ENCODE measurements at regions of chr3 and their contacts with region 1.

Region 1: GRCh38 chr3:159988617-159989271 is at the start of gene IL12A:
- DNase-seq: peak; percentile 92
- ATAC-seq: peak; percentile 97
- H3K4me3 ChIP-seq: peak within 1 kb of the TSS; percentile 49 to 87 (median 81)
- H3K4me3 Mint-ChIP-seq: peak within 1 kb of the TSS; percentile 93
- H3K27ac ChIP-seq: peak within 1 kb of the TSS; percentile 59 to 70
- H3K27ac Mint-ChIP-seq: peak within 1 kb of the TSS; percentile 89
- H3K4me1 ChIP-seq: peaks cover 15 to 29% of the 10 kb centered on the region in 2 donors
- H3K4me1 Mint-ChIP-seq: peaks cover 47% of the 10 kb centered on the region
- H3K27me3 ChIP-seq: no peaks in the 10 kb centered on the region
- H3K27me3 Mint-ChIP-seq: no peaks in the 10 kb centered on the region
- CTCF ChIP-seq: peak; percentile 98
- total RNA-seq, gene IL12A: 4.3 and 6.1 TPM in 2 replicates

Region 2: GRCh38 chr3:159919873-159920272 is 68.9 kb before region 1 on chr3:
- CTCF ChIA-PET with region 1: interaction called, 15 read pairs
- POLR2A ChIA-PET with region 1: no interaction called
- intact Hi-C with region 1: loop called (anchors 5 kb)
- DNase-seq: no peak
- ATAC-seq: no peak
- H3K4me3 ChIP-seq: no peak overlapping the region
- H3K4me3 Mint-ChIP-seq: no peak overlapping the region
- H3K27ac ChIP-seq: no peak overlapping the region
- H3K27ac Mint-ChIP-seq: peak overlapping the region; percentile 15
- H3K4me1 ChIP-seq: peaks cover 13 to 26% of the 10 kb centered on the region in 2 donors
- H3K4me1 Mint-ChIP-seq: peaks cover 33% of the 10 kb centered on the region
- H3K27me3 ChIP-seq: no peaks in the 10 kb centered on the region
- H3K27me3 Mint-ChIP-seq: no peaks in the 10 kb centered on the region
- CTCF ChIP-seq: no peak

Region 3: DNA sequence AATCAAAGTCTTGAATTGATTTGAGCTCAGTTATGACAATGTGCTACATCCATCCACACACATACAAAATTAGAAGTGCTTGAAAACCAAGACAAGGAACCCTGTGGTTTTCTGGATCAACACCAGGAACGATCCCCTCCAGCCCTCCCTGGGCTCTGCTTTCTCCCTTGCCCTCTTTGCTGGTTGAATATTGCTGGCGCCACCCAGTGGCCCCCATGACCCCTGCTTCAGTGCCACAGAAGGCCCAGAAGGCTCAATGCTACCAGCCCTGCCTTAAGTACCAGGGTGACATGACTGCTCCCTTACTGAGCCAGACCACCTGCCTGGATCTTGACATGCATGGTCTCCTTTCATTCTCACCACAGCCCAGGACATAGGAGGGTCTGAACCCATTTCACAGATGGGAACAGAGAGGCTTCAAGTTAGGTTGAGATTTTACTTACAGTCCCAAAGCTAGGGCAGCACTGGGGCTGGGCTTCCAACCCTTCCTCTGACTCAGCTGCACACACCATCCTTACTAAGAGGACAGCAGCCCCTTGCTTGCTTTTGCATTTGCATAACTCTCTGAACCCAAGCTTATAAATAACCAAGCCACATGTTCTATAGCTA is 14.9 kb after region 1 on chr3:
- CTCF ChIA-PET with region 1: interaction called, 140 read pairs
- POLR2A ChIA-PET with region 1: interaction called, 3 read pairs
- intact Hi-C with region 1: loop called (anchors 2 kb)
- DNase-seq: peak; percentile 64
- ATAC-seq: peak; percentile 82
- H3K4me3 ChIP-seq: no peak overlapping the region
- H3K4me3 Mint-ChIP-seq: no peak overlapping the region
- H3K27ac ChIP-seq: no peak overlapping the region
- H3K27ac Mint-ChIP-seq: peak overlapping the region; percentile 34
- H3K4me1 ChIP-seq: no peaks in the 10 kb centered on the region
- H3K4me1 Mint-ChIP-seq: peaks cover 6% of the 10 kb centered on the region
- H3K27me3 ChIP-seq: no peaks in the 10 kb centered on the region
- H3K27me3 Mint-ChIP-seq: no peaks in the 10 kb centered on the region
- CTCF ChIP-seq: peak; percentile 71

Region 4: DNA sequence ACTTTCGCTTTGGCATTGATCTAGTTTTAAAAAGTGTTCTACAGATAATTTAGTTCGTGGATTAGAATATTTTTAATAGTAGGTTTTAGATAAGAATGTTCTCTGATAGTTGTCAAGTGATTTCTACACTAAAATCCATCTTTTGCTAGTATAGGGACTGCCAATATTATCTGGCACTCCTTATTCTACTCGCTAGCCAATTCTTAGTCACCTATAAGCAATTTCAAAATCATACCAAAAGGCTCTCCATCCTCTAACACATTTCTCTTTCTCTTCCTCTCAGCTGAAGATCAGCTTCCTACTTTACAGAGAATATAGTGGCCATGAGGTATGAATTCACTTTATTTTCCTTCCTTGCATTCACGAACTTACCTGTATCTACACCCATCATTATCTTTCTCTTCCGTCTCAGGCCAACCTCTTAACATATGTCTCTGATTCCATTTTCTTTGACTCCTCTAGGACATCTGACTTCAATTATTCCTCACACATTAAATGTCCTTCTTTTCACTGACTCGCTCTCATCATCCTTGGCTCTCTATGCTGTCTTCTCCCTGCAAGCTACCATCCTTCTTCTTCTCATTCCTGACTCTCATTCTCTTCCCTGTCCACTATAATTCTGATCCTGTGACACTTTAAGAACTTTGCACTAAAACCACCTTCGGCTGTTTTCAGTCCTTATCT is 272.0 kb after region 1 on chr3:
- CTCF ChIA-PET with region 1: no interaction called
- POLR2A ChIA-PET with region 1: no interaction called
- intact Hi-C with region 1: no loop called
- DNase-seq: no peak
- ATAC-seq: no peak
- H3K4me3 ChIP-seq: no peak overlapping the region
- H3K4me3 Mint-ChIP-seq: no peak overlapping the region
- H3K27ac ChIP-seq: no peak overlapping the region
- H3K27ac Mint-ChIP-seq: no peak overlapping the region
- H3K4me1 ChIP-seq: no peaks in the 10 kb centered on the region
- H3K4me1 Mint-ChIP-seq: no peaks in the 10 kb centered on the region
- H3K27me3 ChIP-seq: no peaks in the 10 kb centered on the region
- H3K27me3 Mint-ChIP-seq: no peaks in the 10 kb centered on the region
- CTCF ChIP-seq: no peak

Region 5: DNA sequence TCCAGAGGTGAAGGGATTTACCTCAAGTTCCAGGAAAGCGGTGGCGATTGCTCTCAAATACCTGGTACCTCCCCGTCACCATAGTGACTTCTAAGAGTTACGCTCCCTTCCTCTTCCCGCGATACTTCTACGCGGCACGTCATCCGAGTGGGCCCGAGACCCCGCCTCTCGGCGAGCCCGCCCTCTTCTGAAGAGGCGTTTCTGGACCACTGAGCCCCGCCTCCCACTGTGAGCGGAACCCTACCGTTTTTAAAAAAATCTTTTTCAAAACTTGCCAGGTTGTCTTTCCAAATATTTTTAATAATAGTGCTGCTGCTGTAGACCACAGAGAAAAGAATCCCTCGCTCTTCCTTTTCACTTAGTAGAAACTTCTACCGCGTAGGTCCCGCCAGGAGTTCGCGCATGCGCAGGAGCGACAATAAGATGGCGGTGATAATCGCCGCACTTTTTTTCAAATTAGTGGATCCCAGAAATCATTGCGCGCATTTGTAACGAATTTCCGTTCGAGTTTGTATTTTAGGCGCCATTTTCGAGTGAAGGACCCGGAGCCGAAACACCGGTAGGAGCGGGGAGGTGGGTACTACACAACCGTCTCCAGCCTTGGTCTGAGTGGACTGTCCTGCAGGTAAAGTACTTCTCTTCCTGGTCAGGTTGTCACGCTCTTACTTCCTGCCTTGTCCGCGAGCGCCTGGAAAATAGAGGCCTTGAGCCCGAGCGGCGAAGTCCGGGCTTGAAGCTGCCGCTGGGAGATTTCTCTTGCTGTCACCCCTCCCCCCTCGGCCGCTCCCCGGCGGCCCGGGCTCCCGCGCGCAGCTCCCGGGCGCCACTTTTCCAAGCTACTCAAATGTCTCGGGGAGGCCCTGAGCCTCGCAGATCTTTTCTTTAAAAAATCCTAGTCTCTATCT is 410.6 kb after region 1 on chr3 and contains the starts of genes IFT80 and SMC4:
- CTCF ChIA-PET with region 1: interaction called, 4 read pairs
- POLR2A ChIA-PET with region 1: no interaction called
- intact Hi-C with region 1: loop called (anchors 1 kb)
- DNase-seq: peak; percentile 97
- ATAC-seq: peak; percentile 96
- H3K4me3 ChIP-seq: peak within 1 kb of the TSS; percentile 71 to 97 (median 85)
- H3K4me3 Mint-ChIP-seq: peak within 1 kb of the TSS; percentile 98
- H3K27ac ChIP-seq: peak within 1 kb of the TSS; percentile 69 to 97
- H3K27ac Mint-ChIP-seq: peak within 1 kb of the TSS; percentile 98
- H3K4me1 ChIP-seq: peaks cover 26 to 45% of the 10 kb centered on the region in 2 donors
- H3K4me1 Mint-ChIP-seq: peaks cover 43% of the 10 kb centered on the region
- H3K27me3 ChIP-seq: peaks cover 0 to 25% (median 7%) of the 10 kb centered on the region in 4 experiments
- H3K27me3 Mint-ChIP-seq: no peaks in the 10 kb centered on the region
- CTCF ChIP-seq: no peak
- total RNA-seq, gene IFT80: 44.1 and 47.0 TPM in 2 replicates
- total RNA-seq, gene SMC4: 53.8 and 55.1 TPM in 2 replicates

Region 6: GRCh38 chr3:160565442-160566403 is 577.0 kb after region 1 on chr3 and contains the start of gene KPNA4:
- CTCF ChIA-PET with region 1: no interaction called
- POLR2A ChIA-PET with region 1: no interaction called
- intact Hi-C with region 1: loop called (anchors 2 kb)
- DNase-seq: peak; percentile 99
- ATAC-seq: peak; percentile 86
- H3K4me3 ChIP-seq: peak within 1 kb of the TSS; percentile 58 to 92 (median 89)
- H3K4me3 Mint-ChIP-seq: peak within 1 kb of the TSS; percentile 97
- H3K27ac ChIP-seq: peak within 1 kb of the TSS; percentile 85 to 94
- H3K27ac Mint-ChIP-seq: peak within 1 kb of the TSS; percentile 99
- H3K4me1 ChIP-seq: peaks cover 23 to 45% of the 10 kb centered on the region in 2 donors
- H3K4me1 Mint-ChIP-seq: peaks cover 52% of the 10 kb centered on the region
- H3K27me3 ChIP-seq: no peaks in the 10 kb centered on the region
- H3K27me3 Mint-ChIP-seq: no peaks in the 10 kb centered on the region
- CTCF ChIP-seq: no peak
- total RNA-seq, gene KPNA4: 53.8 and 55.1 TPM in 2 replicates